KBM-7 (cell line): ENCODE measurements at regions of chr9 and their contacts with region 1.

Region 1: DNA sequence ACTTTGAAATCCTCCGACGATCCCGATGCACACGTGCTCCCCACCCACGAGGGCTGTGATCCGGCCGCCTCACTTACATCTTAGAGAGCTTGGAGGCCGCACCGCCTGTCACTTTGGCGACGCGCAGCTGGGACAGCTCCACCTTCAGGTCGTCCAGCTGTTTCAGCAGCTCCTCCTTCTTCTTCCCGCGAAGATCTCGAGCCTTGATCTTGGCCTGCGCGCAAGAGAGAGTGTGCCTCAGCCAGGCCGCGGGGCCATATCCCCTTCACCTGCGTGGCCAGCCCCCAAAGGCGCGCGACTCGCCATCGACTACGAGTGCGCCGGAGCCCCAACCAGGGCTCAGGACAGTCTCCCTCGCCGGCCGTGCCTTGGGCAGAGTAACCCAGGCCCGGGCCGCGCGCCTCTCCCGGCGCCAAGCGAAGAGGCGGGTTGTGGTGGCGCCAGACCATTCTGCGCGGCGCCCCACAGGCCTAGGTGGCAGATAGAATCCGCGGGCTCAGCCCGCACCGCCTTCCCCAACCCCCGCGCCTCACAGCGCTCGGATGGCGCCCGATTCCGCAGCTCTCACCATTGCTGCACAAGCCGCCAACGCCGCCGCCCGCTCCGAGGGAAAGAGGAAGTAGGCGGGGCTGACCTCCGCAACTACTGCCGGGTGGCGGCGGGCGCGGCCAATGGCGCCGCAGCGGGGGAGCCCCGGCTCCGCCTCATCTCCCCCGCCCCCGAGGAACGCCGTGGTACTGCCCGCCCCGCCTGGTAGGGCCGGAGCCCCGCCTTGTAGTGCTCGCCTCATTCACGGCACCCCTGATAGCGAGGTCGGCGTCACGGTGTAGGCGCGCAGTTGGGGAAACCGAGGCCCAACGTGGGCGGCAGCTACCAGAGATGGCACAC is at the starts of genes ARPC5L and RPL35:
- DNase-seq: peak; percentile 94

Region 2: GRCh38 chr9:124969401-124969800 is 107.8 kb after region 1 on chr9:
- in situ Hi-C with region 1: no loop called
- DNase-seq: no peak

Region 3: DNA sequence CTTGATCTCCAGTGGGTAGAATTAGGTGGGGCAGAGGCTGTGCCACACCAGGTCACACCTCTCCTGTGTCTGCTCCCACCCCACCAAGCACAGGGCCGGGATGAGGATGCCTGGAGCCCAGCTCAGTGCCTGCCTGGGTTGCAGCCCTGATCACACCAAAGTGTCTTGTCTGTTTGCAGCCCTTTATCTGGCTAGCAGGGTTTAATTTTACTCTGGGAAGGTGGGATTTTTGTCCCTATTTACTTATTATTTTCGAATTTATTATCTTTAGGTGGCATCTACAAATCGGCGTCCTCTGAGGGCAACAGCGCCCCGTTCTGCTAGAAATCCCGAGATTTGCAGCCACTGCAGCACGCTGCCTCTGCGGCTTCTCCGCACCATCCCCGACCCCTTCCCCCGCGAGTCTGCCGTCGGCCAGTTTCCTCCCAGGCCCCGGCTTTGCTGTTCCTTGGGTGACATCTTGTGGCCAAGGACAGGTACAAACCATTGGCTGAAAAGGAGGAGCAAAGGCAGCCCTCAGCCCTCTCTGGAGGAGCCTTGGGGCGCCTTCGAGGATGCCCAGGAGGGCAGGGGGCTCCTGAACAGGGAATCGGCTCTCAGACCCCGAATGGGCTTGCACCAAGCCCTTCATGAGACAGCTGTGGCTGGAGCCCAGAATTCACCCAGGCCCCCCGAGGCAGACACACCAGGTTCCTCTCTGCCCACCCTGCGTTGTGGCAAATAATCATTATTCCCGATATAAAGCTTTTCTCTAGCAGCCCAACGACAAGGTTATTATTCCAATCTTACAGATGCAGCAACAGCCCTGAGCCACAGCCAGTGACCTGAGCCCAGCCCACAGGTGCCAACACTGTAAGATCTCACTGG is 513.1 kb after region 1 on chr9:
- in situ Hi-C with region 1: loop called (anchors 25 kb)
- DNase-seq: peak; percentile 70